Posterior cingulate gyrus (tissue), 11 donors: ENCODE measurements at regions of chr1 and their contacts with region 1.

Region 1: GRCh38 chr1:117758444-117759316 is 152.8 kb downstream of the TENT5C start:
- DNase-seq: peak; percentile 46 to 95 (median 72)

Region 2: DNA sequence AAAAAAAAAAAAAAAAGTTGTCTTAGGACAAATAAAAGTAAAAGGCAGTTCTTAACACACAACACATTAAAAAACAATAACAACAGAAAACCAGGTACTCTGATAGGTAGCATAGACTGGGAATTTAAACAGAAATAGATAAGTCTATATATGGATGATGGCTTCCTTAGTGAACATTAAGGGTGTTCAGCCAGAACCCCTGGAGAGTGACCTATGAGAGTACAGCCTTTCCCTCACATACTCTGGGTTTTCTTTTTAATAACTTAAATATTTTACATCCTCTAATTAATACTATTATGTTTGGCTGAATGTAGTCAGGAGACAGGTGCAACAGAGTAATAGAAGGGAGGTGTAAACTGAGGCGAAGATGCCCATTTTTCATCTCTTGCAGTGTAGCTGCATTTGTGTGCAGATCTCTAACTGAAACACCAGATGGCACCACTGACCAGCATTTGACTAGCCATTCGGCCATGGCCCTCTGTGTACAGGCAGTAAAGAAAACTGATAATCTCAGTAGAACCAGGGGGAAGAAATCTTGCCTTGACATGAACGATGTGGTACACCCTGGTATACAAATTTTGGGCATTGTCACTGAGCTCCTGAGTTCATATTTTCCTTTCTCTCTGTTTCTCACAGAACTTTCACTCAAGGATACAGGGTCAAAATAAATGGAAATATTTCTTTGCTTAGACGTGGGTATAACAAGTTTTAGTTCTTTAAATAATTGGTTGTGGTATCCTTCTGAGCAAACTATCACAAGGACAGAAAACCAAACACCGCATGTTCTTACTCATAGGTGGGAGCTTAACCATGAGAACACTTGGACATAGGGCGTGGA is 690.9 kb before region 1 on chr1:
- intact Hi-C with region 1: loop called (anchors 2 kb)
- DNase-seq: peak; percentile 35 to 95 (median 68)

Region 3: DNA sequence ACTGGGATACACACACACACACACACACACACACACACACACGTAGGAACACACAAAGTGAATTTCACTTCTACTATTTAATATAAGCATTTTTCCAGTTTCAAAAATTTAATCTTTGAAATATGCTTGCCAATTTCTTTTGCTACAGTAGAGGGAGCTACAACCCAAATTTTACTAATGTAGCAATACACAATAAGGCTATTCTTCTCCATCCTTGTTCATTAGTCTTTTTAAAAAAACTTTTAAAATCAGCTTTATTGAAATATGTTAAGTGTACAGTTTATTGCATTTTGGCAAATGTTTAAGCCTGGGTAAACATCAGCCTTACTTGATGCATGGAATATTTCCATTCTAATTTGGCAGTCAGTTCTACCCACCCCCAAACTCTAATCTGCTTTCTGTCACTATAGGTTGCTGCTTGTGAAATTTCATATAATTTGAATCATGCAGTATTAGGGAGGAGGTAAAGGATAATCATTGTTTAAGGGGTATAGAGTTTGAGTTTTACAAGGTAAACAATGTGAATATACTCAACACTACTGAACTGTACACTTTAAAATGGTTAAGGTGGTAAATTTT is 245.8 kb before region 1 on chr1:
- intact Hi-C with region 1: loop called (anchors 1 kb)
- DNase-seq: no peak

Region 4: DNA sequence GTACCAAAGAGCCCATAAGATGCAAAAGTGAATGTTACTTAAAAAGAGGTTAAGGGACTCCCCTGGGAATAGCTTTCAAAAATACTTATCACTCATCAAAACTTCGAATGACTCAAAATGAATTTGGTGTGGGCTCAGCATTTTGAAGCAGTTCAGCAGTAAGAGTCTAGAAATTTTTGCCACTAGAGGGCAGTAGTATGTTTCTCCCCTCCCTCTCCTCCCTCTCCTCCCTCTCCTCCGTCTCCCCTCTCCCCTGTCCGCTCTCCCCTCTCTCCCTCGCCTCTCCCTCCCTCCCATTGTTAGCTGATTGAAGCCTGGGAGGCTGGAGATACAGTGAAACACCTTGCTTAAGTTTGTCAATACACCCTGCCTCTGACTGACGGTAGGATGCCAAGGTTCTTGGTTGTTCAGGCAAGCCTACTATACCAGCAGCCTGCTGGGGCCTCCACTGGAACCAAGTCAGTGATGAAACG is 223.6 kb before region 1 on chr1:
- intact Hi-C with region 1: loop called (anchors 2 kb)
- DNase-seq: peak in 2 of 10 donors; percentile 14 to 61

Region 5: DNA sequence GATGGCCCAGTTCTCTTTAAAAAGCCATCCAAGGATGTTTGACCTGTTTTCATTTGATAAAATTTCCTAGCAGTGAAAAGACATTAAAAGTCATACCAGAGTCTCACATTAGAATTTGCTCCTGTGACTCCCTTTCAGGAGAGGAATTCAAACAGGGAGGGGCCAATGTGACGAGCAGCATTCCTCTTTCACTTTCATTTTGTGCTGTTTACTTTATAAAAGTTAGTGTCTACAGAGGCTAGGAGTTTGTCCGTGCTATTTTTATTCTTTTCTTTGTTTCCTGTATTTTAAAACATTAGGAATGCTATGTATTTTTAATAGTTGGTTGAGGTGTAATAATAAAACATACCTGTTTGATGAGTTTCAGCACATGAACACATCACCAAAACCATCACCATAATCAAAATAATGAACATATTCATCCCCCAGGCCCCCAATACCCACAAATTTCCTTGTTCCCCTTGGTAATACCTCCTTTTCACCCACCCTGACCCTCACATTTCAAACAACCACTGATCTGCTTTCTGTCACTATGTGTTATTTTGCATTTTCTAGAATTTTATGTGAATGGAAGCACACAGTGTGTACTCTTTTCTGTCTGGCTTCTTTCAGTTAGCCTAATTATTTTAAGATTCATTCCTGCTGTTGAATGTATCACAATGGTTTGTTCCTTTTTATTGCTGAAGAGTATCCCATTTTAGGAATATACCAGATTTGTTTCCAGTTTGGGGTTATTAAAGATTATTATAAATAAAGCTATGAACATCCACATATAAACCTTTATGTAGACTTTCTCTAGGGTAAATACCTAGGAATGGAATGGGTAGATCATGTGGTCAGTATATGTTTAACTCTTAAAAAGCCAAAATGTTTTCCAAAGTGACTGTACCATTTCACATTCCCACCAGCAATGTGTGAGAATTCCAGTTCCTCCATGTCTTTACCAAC is 23.4 kb before region 1 on chr1:
- intact Hi-C with region 1: no loop called
- DNase-seq: no peak

Region 6: GRCh38 chr1:117770981-117771531 is 12.4 kb after region 1 on chr1:
- intact Hi-C with region 1: no loop called
- DNase-seq: no peak

Region 7: DNA sequence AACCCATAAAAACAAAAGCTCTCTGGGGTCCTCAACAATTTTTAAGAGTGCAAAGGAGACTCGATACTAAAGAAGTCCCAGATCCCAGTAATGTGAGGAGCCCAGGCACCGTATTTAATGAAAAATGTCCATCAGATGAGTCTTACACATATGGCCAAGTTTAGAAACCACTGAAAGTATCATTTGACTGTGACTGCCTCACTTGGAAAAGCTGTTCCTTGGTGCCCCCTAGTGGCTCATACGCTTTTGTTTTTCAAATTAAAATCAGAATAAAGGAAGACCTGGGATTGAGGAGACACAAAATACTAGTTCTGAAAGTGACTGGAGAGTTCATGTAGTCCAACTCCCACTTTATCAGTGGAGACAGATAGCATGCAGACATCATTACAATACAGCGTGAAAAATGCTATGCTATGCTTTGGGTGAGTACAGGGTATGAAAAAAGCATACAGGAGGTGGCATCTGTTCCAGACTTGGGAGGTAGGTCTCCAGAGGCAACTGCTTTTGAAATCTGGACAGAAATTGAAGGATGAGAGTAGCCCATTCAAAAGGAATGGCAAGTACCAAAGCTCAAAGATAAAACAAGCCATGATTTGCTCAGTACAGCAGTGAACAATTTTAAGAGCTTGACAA is 136.9 kb after region 1 on chr1:
- intact Hi-C with region 1: loop called (anchors 5 kb)
- DNase-seq: peak in 6 of 10 donors; percentile 33 to 76 (median 46)